ENCODE measurements at regions of chr9 and their contacts with region 1.

Region 1: DNA sequence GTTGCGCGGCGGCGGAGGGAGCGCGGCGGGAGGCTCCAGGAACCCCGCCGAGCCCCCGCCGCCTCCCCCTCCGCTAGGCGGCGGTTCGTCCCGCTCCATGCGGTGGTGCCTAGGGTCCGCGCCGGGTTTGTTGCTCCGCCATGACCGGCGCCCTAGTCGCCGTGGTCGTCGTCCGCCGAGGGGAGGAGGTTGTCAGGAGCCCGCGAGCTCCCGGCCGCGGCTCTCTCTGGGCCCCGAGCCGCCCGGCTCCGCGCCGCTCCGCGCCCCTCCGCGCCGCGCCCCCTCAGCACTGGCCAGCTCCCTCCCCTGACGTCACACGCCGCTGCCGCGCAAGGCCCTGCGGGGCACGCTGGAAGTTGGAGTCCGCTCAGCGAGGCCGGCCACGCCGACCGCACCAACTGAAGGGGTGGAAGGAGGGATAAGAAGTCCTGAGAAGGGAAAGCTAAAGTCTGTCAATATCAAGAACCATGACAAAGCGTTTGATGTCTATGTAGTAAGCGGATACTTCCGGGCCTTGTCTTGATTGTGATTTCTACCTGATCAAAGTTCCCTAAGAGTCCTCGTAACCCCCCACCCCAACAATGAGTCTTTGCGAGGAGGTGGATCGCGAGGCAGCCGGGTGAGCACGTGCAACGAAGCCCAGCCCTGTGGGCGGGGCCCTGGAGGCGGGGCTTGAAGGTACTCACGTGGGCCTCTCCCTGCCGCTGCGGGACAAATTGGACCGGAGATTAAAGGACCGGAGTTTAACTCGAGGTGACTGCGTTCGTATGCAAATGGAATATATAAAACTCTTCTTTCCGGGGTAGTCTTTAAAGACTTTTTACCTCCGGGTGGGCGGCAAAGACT is at the start of gene NR6A1:
- DNase-seq: peak; percentile 82 to 95 (median 91)
- ATAC-seq: peak; percentile 90 to 94 (median 92)
- H3K4me3 ChIP-seq: peak within 1 kb of the TSS; percentile 53 to 66
- H3K4me3 Mint-ChIP-seq: peak within 1 kb of the TSS; percentile 83 to 96 (median 84)
- H3K27ac ChIP-seq: peak within 1 kb of the TSS; percentile 37
- H3K27ac Mint-ChIP-seq: peak within 1 kb of the TSS; percentile 65 to 80
- H3K4me1 ChIP-seq: peaks cover 2 to 34% of the 10 kb centered on the region in 2 experiments
- H3K4me1 Mint-ChIP-seq: peaks cover 42 to 48% (median 45%) of the 10 kb centered on the region in 3 donors
- H3K27me3 ChIP-seq: peaks cover 2 to 59% of the 10 kb centered on the region in 2 experiments
- H3K27me3 Mint-ChIP-seq: peaks cover 62 to 71% of the 10 kb centered on the region in 2 donors
- total RNA-seq, gene NR6A1: 0.19 to 0.50 (median 0.40) TPM in 4 of 5 donors, not detected in the other

Region 2: GRCh38 chr9:124754289-124754688 is 17.0 kb before region 1 on chr9:
- CTCF ChIA-PET with region 1: interaction called in 1 of 2 experiments, 3 read pairs
- POLR2A ChIA-PET with region 1: interaction called in 1 of 2 experiments, 12 read pairs
- DNase-seq: no peak
- ATAC-seq: no peak
- H3K4me3 ChIP-seq: no peak overlapping the region
- H3K4me3 Mint-ChIP-seq: no peak overlapping the region
- H3K27ac ChIP-seq: no peak overlapping the region
- H3K27ac Mint-ChIP-seq: no peak overlapping the region
- H3K4me1 ChIP-seq: no peaks in the 10 kb centered on the region
- H3K4me1 Mint-ChIP-seq: no peaks in the 10 kb centered on the region
- H3K27me3 ChIP-seq: no peaks in the 10 kb centered on the region
- H3K27me3 Mint-ChIP-seq: peaks cover 56 to 68% of the 10 kb centered on the region in 2 donors

Region 3: DNA sequence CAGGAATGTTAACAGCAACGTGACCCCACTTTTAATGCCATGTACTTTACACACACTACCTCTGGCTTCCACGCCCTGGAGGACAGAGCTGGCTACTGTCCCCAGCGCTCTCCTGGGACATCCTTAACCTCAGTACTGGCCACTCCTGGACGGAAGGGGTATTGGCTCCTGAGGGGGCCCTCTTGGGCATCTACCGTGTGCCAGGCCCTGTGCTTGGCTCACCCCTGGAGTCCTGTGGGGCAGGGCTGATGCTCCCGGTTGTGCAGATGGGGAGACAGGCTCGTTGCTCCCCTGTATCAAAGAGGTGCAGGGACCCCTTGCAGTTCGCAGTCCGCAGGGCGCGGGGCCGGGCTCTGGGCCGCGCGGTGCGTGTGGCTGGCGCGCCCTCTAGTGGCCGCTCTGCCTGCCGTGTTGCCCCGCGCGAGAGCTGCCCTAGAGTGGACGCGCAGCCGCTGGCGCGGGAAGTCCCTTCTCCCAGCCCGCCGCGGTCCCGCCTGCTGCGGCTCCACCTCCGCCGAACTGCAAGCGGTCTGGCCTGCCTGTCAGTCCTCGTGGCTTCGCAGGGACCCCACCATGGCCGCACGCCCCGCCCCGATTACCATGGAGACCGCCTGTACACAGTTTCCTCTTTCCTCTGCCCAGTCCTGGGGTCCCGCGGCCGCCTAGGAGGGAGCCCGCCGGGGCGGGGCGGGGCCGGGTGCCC is 81.7 kb after region 1 on chr9 and contains the start of gene WDR38:
- CTCF ChIA-PET with region 1: interaction called, 7 to 13 read pairs
- POLR2A ChIA-PET with region 1: no interaction called
- DNase-seq: peak; percentile 55 to 92 (median 74)
- ATAC-seq: peak; percentile 80 to 87 (median 84)
- H3K4me3 ChIP-seq: peak within 1 kb of the TSS; percentile 32 to 49
- H3K4me3 Mint-ChIP-seq: peak within 1 kb of the TSS; percentile 62 to 71 (median 66)
- H3K27ac ChIP-seq: peak within 1 kb of the TSS; percentile 69
- H3K27ac Mint-ChIP-seq: peak within 1 kb of the TSS in 1 of 2 donors; percentile 45
- H3K4me1 ChIP-seq: peaks cover 0 to 20% of the 10 kb centered on the region in 2 experiments
- H3K4me1 Mint-ChIP-seq: peaks cover 6 to 20% (median 11%) of the 10 kb centered on the region in 3 donors
- H3K27me3 ChIP-seq: peaks cover 0 to 17% of the 10 kb centered on the region in 2 experiments
- H3K27me3 Mint-ChIP-seq: peaks cover 4 to 5% of the 10 kb centered on the region in 2 donors
- total RNA-seq, gene WDR38: not detected